Ascending aorta (tissue), 2 donors: ENCODE measurements at regions of chr19 and their contacts with region 1.

Region 1: GRCh38 chr19:35648017-35648961 is at the start of gene COX6B1:
- DNase-seq: peak; percentile 85 to 98
- H3K4me3 ChIP-seq: peak within 1 kb of the TSS; percentile 77 to 88
- H3K27ac ChIP-seq: peak within 1 kb of the TSS; percentile 76 to 83
- H3K4me1 ChIP-seq: peaks cover 0 to 25% of the 10 kb centered on the region in 2 donors
- H3K27me3 ChIP-seq: no peaks in the 10 kb centered on the region
- CTCF ChIP-seq: no peak
- total RNA-seq, gene COX6B1: 301 TPM

Region 2: DNA sequence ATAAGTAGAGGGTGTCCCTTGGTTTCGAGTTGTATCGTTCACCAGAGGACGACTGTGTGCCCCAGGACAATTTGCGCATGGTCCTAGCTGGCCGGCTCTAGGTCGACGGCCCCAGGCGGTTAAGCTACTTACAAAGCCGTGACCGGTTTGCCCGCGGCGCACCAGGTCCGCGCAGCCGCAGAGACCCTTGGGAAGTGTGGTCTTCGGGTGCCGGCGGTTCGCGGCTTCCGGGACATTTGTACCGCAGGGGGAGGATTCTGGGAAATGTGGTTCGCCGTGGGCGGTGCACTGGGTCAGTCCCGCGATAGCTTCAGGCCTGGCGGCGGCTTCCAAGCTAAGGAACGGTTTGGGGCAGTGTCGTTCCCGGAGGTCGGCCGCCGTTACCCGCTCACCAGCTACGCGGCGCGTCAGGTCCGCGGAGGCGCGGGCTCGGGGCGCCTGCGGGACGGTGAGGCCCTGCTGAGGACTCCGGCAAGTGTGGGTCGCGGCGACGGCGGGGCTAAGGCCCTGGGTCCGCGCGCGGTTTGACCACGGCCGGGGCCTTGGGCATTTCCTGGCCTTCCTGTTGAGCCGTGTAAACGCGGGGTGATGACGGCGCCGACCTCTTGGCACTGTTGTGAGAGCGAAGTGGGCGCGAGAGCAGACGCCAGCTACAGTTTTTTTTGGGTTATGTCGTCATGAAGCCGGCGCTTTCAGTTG is 970.8 kb before region 1 on chr19 and contains the start of gene ZNF302:
- intact Hi-C with region 1: loop called (anchors 10 kb)
- DNase-seq: peak; percentile 86 to 98
- H3K4me3 ChIP-seq: peak within 1 kb of the TSS; percentile 83 to 85
- H3K27ac ChIP-seq: peak within 1 kb of the TSS; percentile 99
- H3K4me1 ChIP-seq: peaks cover 0 to 9% of the 10 kb centered on the region in 2 donors
- H3K27me3 ChIP-seq: no peaks in the 10 kb centered on the region
- CTCF ChIP-seq: no peak
- total RNA-seq, gene ZNF302: 42.0 TPM

Region 3: DNA sequence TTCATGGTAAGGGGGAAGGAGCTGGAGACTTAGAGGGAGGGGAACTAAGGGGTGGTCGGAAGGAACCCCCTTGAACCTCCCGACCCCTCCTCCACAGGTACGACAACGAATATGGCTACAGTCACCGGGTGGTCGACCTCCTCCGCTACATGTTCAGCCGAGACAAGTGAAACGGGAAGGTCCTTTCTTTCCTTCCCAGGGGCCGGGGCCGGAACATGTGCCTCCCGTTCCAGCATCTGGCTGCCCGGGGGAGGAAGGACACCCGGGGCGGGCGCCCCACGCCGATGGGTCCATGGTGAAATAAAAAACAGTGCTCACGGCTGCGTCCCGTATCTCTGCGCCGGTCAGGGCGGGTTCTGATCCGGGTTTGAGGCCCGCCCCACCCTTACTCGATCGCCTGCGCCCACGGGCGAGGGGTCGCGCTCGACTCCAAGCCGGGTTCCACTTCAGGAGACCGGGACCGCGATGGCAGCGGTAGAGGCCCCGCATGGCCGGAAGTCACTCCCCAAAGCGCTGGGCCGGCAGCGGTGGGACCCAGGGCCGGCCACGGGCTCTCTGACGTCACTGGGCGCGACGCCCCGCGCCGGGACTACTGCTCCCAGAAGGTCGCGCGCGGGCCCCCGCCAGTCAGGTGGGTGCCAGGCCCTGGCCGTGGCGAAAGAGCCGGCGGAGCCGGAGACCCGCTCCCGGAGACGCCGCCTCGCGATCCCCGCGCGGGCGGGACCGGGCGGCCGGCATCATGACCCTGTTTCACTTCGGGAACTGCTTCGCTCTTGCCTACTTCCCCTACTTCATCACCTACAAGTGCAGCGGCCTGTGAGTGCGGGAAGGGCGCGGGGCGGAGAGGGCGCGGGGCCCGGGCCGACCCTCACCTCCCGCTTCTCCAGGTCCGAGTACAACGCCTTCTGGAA is 103.0 kb before region 1 on chr19 and contains the start of gene TMEM147:
- intact Hi-C with region 1: loop called (anchors 5 kb)
- DNase-seq: peak; percentile 65 to 96
- H3K4me3 ChIP-seq: peak within 1 kb of the TSS; percentile 87 to 88
- H3K27ac ChIP-seq: peak within 1 kb of the TSS; percentile 76 to 88
- H3K4me1 ChIP-seq: peaks cover 0 to 15% of the 10 kb centered on the region in 2 donors
- H3K27me3 ChIP-seq: no peaks in the 10 kb centered on the region
- CTCF ChIP-seq: no peak
- total RNA-seq, gene TMEM147: 99.7 TPM

Region 4: GRCh38 chr19:35702223-35703012 is 54.1 kb after region 1 on chr19:
- intact Hi-C with region 1: loop called (anchors 2 kb)
- DNase-seq: peak; percentile 94 to 98
- H3K4me3 ChIP-seq: peak overlapping the region; percentile 64 to 65
- H3K27ac ChIP-seq: no peak overlapping the region
- H3K4me1 ChIP-seq: peaks cover 2 to 3% of the 10 kb centered on the region in 2 donors
- H3K27me3 ChIP-seq: no peaks in the 10 kb centered on the region
- CTCF ChIP-seq: no peak

Region 5: DNA sequence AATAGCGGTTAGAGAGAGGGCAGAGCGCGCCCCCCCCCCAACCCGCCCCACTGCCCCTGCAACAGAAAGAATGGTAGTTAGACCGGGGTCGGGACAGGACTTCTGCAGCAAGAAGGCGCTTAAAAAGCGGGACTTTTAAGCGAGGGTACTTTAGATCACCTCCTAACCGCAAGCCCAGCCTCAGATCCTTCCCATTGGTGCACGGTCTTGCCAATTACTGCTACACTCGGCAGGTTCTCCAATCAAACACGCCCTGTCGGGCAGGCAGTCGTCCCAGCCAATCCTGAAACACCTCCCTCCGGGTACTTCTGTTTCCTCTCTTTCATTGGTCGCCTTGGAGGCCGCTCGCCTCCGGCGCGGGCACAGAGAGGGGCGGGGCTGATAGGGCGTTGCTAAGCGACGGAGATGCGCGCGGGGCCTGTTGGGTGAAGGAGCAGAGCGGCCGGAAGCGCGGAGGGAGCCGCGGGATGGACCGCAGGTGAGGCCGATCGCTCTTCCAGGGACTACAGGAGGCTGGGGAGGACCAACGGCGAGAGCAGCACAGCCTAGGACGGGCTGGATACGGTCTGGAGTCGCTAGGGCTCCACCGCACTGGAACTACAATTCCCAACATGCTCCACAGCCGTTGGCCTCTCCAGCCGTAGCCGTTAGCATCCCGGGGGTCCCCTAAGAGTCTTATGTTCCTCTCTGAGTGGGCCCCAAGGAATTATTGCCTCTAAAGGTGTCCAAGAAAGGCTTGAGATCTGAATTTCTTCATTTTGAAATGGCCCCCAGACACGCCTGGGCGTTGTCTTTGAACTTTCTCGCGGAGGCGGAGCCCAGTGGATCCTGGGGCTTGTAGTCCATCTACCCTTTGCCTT is 109.7 kb after region 1 on chr19 and contains the start of gene PROSER3:
- intact Hi-C with region 1: loop called (anchors 5 kb)
- DNase-seq: peak; percentile 98 to 99
- H3K4me3 ChIP-seq: peak within 1 kb of the TSS; percentile 53 to 85
- H3K27ac ChIP-seq: peak within 1 kb of the TSS; percentile 99
- H3K4me1 ChIP-seq: peaks cover 7 to 24% of the 10 kb centered on the region in 2 donors
- H3K27me3 ChIP-seq: no peaks in the 10 kb centered on the region
- CTCF ChIP-seq: no peak
- total RNA-seq, gene PROSER3: 6.5 TPM

Region 6: GRCh38 chr19:36054119-36054732 is 405.9 kb after region 1 on chr19 and contains the start of gene THAP8:
- intact Hi-C with region 1: loop called (anchors 10 kb)
- DNase-seq: peak; percentile 100
- H3K4me3 ChIP-seq: peak within 1 kb of the TSS; percentile 71 to 80
- H3K27ac ChIP-seq: peak within 1 kb of the TSS; percentile 91 to 92
- H3K4me1 ChIP-seq: peaks cover 0 to 6% of the 10 kb centered on the region in 2 donors
- H3K27me3 ChIP-seq: no peaks in the 10 kb centered on the region
- CTCF ChIP-seq: peak; percentile 57 to 64 (median 57)
- total RNA-seq, gene THAP8: not detected